CD4-positive, alpha-beta memory T cell (primary cell): ENCODE measurements at regions of chr12 and their contacts with region 1.

Region 1: DNA sequence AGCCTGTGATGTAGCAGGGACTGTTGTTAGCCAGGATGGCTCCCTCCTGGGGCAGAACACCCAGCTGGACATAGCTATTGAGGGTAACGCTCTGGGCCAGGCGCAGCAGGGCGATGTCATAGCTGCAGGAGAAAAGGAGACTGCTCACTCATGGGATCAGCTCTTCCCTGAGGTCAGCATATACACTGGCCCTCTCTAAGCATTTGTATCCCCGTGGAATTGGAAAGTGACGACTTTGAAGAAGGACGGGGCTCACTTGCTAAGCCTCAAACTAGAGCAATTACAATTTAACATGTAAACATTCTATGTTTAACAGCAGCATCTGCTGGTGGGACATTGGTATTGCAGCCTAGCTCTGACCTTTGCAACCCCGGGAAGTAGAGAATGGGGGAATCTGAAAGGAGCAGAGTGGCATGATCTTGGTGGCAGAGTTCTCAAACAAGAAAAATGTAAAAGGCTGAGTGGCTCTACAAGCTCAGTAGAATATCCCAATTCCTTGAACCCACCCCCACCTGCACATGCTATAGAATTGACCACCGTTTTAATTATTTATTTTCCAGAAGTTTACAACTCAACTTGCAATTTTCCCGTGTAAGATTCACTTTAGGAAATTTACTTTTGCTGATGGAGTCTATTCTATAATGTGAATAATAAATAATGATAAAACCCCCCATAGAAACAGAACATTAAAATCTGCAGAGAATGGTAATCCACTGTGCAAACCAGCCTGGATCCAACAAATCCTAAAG is 5.0 kb downstream of the CELA1 start:
- DNase-seq: peak; percentile 72 to 77 (median 75)
- H3K4me3 ChIP-seq: no peak overlapping the region
- H3K4me3 Mint-ChIP-seq: peak overlapping the region in 5 of 8 donors; percentile 39 to 77 (median 64)
- H3K27ac ChIP-seq: no peak overlapping the region
- H3K27ac Mint-ChIP-seq: peak overlapping the region in 6 of 7 donors; percentile 38 to 89 (median 68)
- H3K4me1 ChIP-seq: peaks cover 6% of the 10 kb centered on the region
- H3K4me1 Mint-ChIP-seq: peaks cover 6 to 9% (median 8%) of the 10 kb centered on the region in 4 donors
- H3K27me3 ChIP-seq: no peaks in the 10 kb centered on the region
- H3K27me3 Mint-ChIP-seq: no peaks in the 10 kb centered on the region

Region 2: GRCh38 chr12:50825372-50825838 is 516.0 kb before region 1 on chr12:
- CTCF ChIA-PET with region 1: interaction called, 10 read pairs
- POLR2A ChIA-PET with region 1: no interaction called
- intact Hi-C with region 1: no loop called
- DNase-seq: peak in 4 of 5 donors; percentile 47 to 65 (median 61)
- H3K4me3 ChIP-seq: no peak overlapping the region
- H3K4me3 Mint-ChIP-seq: peak overlapping the region in 1 of 8 donors; percentile 57
- H3K27ac ChIP-seq: peak overlapping the region; percentile 45
- H3K27ac Mint-ChIP-seq: peak overlapping the region; percentile 85 to 97 (median 93)
- H3K4me1 ChIP-seq: peaks cover 4% of the 10 kb centered on the region
- H3K4me1 Mint-ChIP-seq: peaks cover 4 to 9% (median 5%) of the 10 kb centered on the region in 4 donors
- H3K27me3 ChIP-seq: no peaks in the 10 kb centered on the region
- H3K27me3 Mint-ChIP-seq: peaks cover 0 to 5% of the 10 kb centered on the region in 2 donors

Region 3: DNA sequence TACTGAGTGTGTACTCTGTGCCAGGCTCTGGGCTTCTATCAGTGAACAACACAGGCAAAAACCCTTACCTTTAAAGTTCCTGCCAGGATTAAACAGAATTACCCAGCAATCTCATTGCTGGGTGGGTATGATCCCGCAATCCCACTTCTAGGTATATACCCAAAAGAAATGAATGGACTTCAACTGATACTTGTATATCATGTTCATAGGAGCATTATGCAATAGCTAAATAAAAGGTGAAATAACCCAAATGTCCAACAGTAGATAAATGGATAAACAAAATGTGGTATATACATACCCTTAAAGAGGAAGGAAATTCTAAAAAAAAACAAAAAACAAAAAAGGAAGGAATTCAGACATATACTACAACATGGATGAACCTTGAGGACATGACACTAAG is 88.2 kb before region 1 on chr12:
- CTCF ChIA-PET with region 1: interaction called, 15 read pairs
- POLR2A ChIA-PET with region 1: no interaction called
- intact Hi-C with region 1: no loop called
- DNase-seq: no peak
- H3K4me3 ChIP-seq: no peak overlapping the region
- H3K4me3 Mint-ChIP-seq: no peak overlapping the region
- H3K27ac ChIP-seq: no peak overlapping the region
- H3K27ac Mint-ChIP-seq: peak overlapping the region in 2 of 7 donors; percentile 12 to 62
- H3K4me1 ChIP-seq: peaks cover 8% of the 10 kb centered on the region
- H3K4me1 Mint-ChIP-seq: peaks cover 4 to 20% (median 12%) of the 10 kb centered on the region in 4 donors
- H3K27me3 ChIP-seq: no peaks in the 10 kb centered on the region
- H3K27me3 Mint-ChIP-seq: no peaks in the 10 kb centered on the region

Region 4: DNA sequence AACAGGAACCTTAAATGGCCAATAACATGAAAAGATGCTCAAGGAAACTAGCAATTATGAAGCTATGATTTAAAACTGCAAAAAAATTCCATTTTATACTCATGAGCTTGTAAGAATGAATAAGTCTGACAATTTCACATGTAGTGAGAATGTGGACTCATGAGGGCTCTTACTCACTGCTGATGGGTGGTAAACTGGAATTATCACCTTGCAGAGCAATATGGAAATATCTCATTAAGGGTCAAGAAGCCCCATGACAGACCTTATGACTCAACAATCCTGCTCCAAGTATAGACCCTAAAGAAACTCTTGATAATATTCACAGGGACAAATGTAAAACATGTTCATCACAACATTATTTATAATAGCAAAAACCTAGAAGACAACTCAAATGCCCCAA is 47.7 kb before region 1 on chr12:
- CTCF ChIA-PET with region 1: interaction called, 37 read pairs
- POLR2A ChIA-PET with region 1: interaction called, 5 read pairs
- intact Hi-C with region 1: no loop called
- DNase-seq: no peak
- H3K4me3 ChIP-seq: no peak overlapping the region
- H3K4me3 Mint-ChIP-seq: no peak overlapping the region
- H3K27ac ChIP-seq: no peak overlapping the region
- H3K27ac Mint-ChIP-seq: peak overlapping the region in 5 of 7 donors; percentile 2 to 80 (median 33)
- H3K4me1 ChIP-seq: no peaks in the 10 kb centered on the region
- H3K4me1 Mint-ChIP-seq: peaks cover 5 to 10% (median 8%) of the 10 kb centered on the region in 4 donors
- H3K27me3 ChIP-seq: no peaks in the 10 kb centered on the region
- H3K27me3 Mint-ChIP-seq: no peaks in the 10 kb centered on the region

Region 5: GRCh38 chr12:51326762-51327439 is 14.5 kb before region 1 on chr12:
- CTCF ChIA-PET with region 1: interaction called, 191 read pairs
- POLR2A ChIA-PET with region 1: interaction called, 86 read pairs
- intact Hi-C with region 1: no loop called
- DNase-seq: no peak
- H3K4me3 ChIP-seq: no peak overlapping the region
- H3K4me3 Mint-ChIP-seq: peak overlapping the region in 7 of 8 donors; percentile 40 to 74 (median 64)
- H3K27ac ChIP-seq: peak overlapping the region; percentile 27
- H3K27ac Mint-ChIP-seq: peak overlapping the region; percentile 77 to 98 (median 94)
- H3K4me1 ChIP-seq: peaks cover 65% of the 10 kb centered on the region
- H3K4me1 Mint-ChIP-seq: peaks cover 51 to 91% (median 71%) of the 10 kb centered on the region in 4 donors
- H3K27me3 ChIP-seq: no peaks in the 10 kb centered on the region
- H3K27me3 Mint-ChIP-seq: no peaks in the 10 kb centered on the region

Region 6: GRCh38 chr12:51531978-51532497 is 190.6 kb after region 1 on chr12:
- CTCF ChIA-PET with region 1: interaction called, 15 read pairs
- POLR2A ChIA-PET with region 1: no interaction called
- intact Hi-C with region 1: loop called (anchors 1 kb)
- DNase-seq: peak; percentile 60 to 70 (median 65)
- H3K4me3 ChIP-seq: no peak overlapping the region
- H3K4me3 Mint-ChIP-seq: no peak overlapping the region
- H3K27ac ChIP-seq: no peak overlapping the region
- H3K27ac Mint-ChIP-seq: peak overlapping the region in 2 of 7 donors; percentile 9 to 27
- H3K4me1 ChIP-seq: no peaks in the 10 kb centered on the region
- H3K4me1 Mint-ChIP-seq: peaks cover 3 to 8% (median 6%) of the 10 kb centered on the region in 4 donors
- H3K27me3 ChIP-seq: no peaks in the 10 kb centered on the region
- H3K27me3 Mint-ChIP-seq: peaks cover 6 to 11% of the 10 kb centered on the region in 2 donors